Dorsolateral prefrontal cortex (tissue), 120 donors: ENCODE measurements at regions of chr5 and their contacts with region 1.

Region 1: GRCh38 chr5:58886315-58887207 is 303.7 kb downstream of the RAB3C start:
- DNase-seq: peak in 8 of 10 donors; percentile 29 to 72 (median 54)
- H3K4me3 ChIP-seq: no peak overlapping the region
- H3K27ac ChIP-seq: peak overlapping the region in 1 of 59 donors; percentile 9
- H3K27me3 ChIP-seq: no peaks in the 10 kb centered on the region
- CTCF ChIP-seq: peak; percentile 71 to 94 (median 84)

Region 2: DNA sequence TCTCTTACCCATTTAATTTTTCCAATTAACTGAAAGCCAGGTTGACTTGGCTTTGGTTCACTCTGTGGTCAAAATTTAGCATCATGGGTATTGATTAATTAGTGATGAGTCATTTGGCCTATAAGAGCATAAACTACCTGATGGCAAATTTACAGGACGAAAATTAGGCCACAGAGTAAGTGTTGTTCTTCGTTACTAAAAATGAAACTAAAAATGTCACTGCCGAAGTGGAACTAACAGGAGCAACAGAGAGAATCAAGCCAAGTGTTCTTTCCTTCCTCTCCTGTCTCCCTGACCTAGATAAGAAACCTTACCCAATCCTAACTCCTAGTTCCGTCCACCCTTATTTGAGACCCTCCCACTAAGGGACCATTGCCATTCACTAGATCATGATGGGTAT is 126.8 kb before region 1 on chr5:
- intact Hi-C with region 1: no loop called
- DNase-seq: no peak
- H3K4me3 ChIP-seq: peak overlapping the region in 53 of 59 donors; percentile 3 to 62 (median 35)
- H3K27ac ChIP-seq: peak overlapping the region in 6 of 59 donors; percentile 5 to 44 (median 35)
- H3K27me3 ChIP-seq: no peaks in the 10 kb centered on the region
- CTCF ChIP-seq: no peak

Region 3: GRCh38 chr5:58922461-58923171 is 36.1 kb after region 1 on chr5:
- intact Hi-C with region 1: no loop called
- DNase-seq: peak in 9 of 10 donors; percentile 27 to 72 (median 58)
- H3K4me3 ChIP-seq: peak overlapping the region in 1 of 59 donors; percentile 22
- H3K27ac ChIP-seq: peak overlapping the region in 36 of 59 donors; percentile 8 to 87 (median 56)
- H3K27me3 ChIP-seq: no peaks in the 10 kb centered on the region
- CTCF ChIP-seq: no peak

Region 4: DNA sequence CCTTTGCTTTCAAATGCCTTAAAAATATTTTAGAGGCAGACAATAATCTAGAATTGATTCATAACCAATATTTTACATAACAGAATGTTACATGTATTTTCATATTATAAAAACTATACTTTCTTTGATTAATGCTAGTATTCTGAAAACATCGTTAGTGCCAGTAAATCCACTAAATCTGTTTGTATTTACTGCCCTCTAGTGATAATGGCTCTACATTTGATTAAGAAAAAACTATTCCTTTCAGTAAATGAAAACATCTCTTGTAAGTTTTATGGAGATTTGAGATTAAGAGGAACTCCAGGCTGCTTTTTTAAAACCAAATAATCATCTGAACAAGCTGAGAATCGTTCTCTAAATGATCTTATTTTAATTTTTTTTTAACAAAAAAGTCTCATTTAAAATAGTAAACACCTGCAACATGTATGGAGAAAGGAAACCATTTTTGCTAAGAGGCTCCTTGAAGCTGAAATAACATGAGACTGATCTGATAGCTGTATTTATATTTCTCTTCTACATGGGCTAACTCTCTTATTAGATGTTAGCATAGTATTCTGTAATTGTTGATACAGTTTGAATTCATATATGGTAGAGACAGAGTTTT is 121.0 kb after region 1 on chr5:
- intact Hi-C with region 1: loop called (anchors 2 kb)
- DNase-seq: no peak
- H3K4me3 ChIP-seq: peak overlapping the region in 1 of 59 donors; percentile 2
- H3K27ac ChIP-seq: no peak overlapping the region
- H3K27me3 ChIP-seq: no peaks in the 10 kb centered on the region
- CTCF ChIP-seq: peak in 55 of 56 donors; percentile 33 to 84 (median 68)

Region 5: GRCh38 chr5:59174248-59174844 is 287.8 kb after region 1 on chr5:
- intact Hi-C with region 1: loop called in 1 of 2 experiments (anchors 10 kb)
- DNase-seq: peak in 1 of 10 donors; percentile 21
- H3K4me3 ChIP-seq: no peak overlapping the region
- H3K27ac ChIP-seq: no peak overlapping the region
- H3K27me3 ChIP-seq: no peaks in the 10 kb centered on the region
- CTCF ChIP-seq: peak; percentile 44 to 84 (median 71)